ENCODE measurements at regions of chr5 and their contacts with region 1.

Region 1: GRCh38 chr5:37837414-37838032 is 2.3 kb downstream of the GDNF start:
- DNase-seq: peak; percentile 68
- H3K4me3 Mint-ChIP-seq: peak overlapping the region; percentile 69
- H3K27ac Mint-ChIP-seq: no peak overlapping the region
- H3K4me1 Mint-ChIP-seq: peaks cover 10% of the 10 kb centered on the region
- H3K27me3 Mint-ChIP-seq: peaks cover 9% of the 10 kb centered on the region
- CTCF ChIP-seq: peak; percentile 94

Region 2: DNA sequence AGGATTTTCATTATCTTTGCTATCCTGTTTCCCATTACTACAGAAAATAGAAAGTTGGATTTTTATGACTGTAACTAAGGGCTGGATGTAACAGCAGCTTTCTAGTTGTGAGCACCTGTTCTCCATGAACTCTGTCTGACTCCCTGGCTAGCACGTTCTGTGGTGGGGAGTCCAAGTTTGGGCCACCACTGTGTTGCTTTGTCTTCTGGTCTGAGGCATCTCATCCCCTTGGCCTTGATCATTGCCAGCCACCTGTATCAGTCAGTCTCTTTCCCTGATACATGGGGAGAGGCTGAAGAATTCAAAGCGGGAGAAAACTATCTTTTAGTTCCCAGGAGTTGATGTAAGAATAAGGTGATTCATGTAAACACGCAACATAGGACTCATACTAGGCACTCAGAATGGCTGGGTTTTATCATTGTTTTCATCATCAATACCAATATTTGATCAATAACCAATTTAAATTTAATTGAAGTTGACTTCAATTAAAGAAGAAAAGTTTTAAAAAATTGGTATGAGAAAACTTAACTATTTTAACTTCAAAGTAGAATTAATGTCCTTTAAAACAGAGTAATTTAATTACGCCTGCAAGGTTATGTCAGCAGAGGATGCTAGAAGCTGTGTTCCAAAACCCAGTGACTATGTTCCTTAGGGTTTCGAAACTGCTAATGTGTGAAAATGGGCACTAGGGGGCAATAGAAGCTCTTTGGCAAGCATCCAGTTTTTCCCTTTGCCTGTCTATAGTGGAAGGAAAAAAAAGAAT is 424.8 kb before region 1 on chr5:
- CTCF ChIA-PET with region 1: interaction called, 3 read pairs
- POLR2A ChIA-PET with region 1: no interaction called
- intact Hi-C with region 1: loop called (anchors 1 kb)
- DNase-seq: peak; percentile 89
- H3K4me3 Mint-ChIP-seq: no peak overlapping the region
- H3K27ac Mint-ChIP-seq: no peak overlapping the region
- H3K4me1 Mint-ChIP-seq: no peaks in the 10 kb centered on the region
- H3K27me3 Mint-ChIP-seq: no peaks in the 10 kb centered on the region
- CTCF ChIP-seq: peak; percentile 92

Region 3: GRCh38 chr5:37900692-37901091 is 63.2 kb after region 1 on chr5:
- CTCF ChIA-PET with region 1: no interaction called
- POLR2A ChIA-PET with region 1: no interaction called
- intact Hi-C with region 1: loop called (anchors 1 kb)
- DNase-seq: peak; percentile 56
- H3K4me3 Mint-ChIP-seq: no peak overlapping the region
- H3K27ac Mint-ChIP-seq: no peak overlapping the region
- H3K4me1 Mint-ChIP-seq: no peaks in the 10 kb centered on the region
- H3K27me3 Mint-ChIP-seq: no peaks in the 10 kb centered on the region
- CTCF ChIP-seq: no peak

Region 4: DNA sequence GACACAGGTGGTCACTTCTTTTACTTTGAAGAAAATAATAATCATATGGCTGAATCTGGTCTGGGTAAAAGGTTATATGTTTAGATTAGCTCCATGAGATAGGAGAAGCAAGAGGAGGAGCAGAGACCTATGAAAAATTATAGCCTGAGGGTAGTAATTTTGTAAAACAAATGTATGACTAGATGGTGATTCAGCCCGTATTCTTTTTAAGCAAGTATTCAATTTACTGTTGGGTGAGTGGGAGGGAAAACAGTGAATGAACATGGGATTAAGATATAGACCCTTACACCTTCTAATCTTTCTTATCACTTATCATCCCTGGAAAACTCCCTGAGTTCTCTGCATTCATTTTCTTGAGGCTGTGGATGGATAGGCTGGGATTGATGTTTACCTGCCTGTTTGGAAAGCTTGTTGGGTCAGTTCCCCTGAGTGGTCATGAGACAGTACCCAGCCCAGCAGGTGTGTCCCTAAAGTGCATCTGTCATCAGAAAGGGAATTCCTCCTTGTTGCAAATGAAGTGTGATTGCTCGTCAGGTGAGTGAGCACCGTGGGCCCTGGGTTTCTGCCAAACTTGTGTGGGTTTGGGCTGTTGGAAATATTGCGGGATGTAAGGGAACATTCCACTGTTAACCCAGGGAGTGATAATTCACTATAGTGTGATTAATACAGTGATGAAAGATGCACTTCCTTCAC is 103.6 kb after region 1 on chr5:
- CTCF ChIA-PET with region 1: no interaction called
- POLR2A ChIA-PET with region 1: no interaction called
- intact Hi-C with region 1: loop called (anchors 1 kb)
- DNase-seq: peak; percentile 77
- H3K4me3 Mint-ChIP-seq: no peak overlapping the region
- H3K27ac Mint-ChIP-seq: peak overlapping the region; percentile 83
- H3K4me1 Mint-ChIP-seq: peaks cover 13% of the 10 kb centered on the region
- H3K27me3 Mint-ChIP-seq: no peaks in the 10 kb centered on the region
- CTCF ChIP-seq: no peak

Region 5: GRCh38 chr5:38023799-38024198 is 186.3 kb after region 1 on chr5:
- CTCF ChIA-PET with region 1: no interaction called
- POLR2A ChIA-PET with region 1: no interaction called
- intact Hi-C with region 1: loop called (anchors 5 kb)
- DNase-seq: no peak
- H3K4me3 Mint-ChIP-seq: no peak overlapping the region
- H3K27ac Mint-ChIP-seq: no peak overlapping the region
- H3K4me1 Mint-ChIP-seq: no peaks in the 10 kb centered on the region
- H3K27me3 Mint-ChIP-seq: no peaks in the 10 kb centered on the region
- CTCF ChIP-seq: no peak

Region 6: GRCh38 chr5:38193015-38193581 is 355.6 kb after region 1 on chr5:
- CTCF ChIA-PET with region 1: interaction called, 156 read pairs
- POLR2A ChIA-PET with region 1: interaction called, 5 read pairs
- intact Hi-C with region 1: loop called (anchors 1 kb)
- DNase-seq: peak; percentile 69
- H3K4me3 Mint-ChIP-seq: no peak overlapping the region
- H3K27ac Mint-ChIP-seq: no peak overlapping the region
- H3K4me1 Mint-ChIP-seq: no peaks in the 10 kb centered on the region
- H3K27me3 Mint-ChIP-seq: peaks cover 21% of the 10 kb centered on the region
- CTCF ChIP-seq: peak; percentile 93